K562 (cell line): ENCODE measurements at regions of chr7 and their contacts with region 1.

Region 1: GRCh38 chr7:141451232-141451631 is 100.0 kb upstream of the AGK start:
- DNase-seq: no peak
- ATAC-seq: no peak
- H3K4me3 ChIP-seq: no peak overlapping the region
- H3K27ac ChIP-seq: no peak overlapping the region
- H3K4me1 ChIP-seq: no peaks in the 10 kb centered on the region
- H3K27me3 ChIP-seq: peaks cover 2 to 14% of the 10 kb centered on the region in 2 experiments; a peak in 4 of 5 replicates
- CTCF ChIP-seq: no peak
- EP300 ChIP-seq: no peak
- POLR2A ChIP-seq: no peak
- RAD21 ChIP-seq: no peak

Region 2: DNA sequence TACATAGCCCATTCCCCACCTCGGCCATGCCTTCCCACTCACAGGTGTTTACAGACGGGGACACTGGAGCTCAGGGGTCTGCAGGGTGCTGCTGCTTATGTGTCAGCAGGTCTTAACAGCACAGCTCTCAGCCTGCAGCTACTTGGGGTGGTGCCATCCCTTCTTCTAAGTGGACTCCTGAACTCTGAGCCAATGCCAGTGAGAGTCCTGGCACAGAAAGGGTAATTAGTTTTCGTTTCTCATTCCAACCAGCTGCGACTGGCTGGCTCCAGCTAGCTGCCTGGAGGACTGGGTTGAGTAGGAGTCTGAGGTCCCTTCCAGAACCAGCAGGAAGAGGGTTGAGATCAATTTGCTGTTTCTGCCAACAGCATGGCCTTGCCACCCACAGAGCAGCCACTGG is 11.7 kb after region 1 on chr7:
- CTCF ChIA-PET with region 1: no interaction called
- POLR2A ChIA-PET with region 1: interaction called, 11 read pairs
- in situ Hi-C with region 1: no loop called
- intact Hi-C with region 1: no loop called
- DNase-seq: no peak
- ATAC-seq: no peak
- H3K4me3 ChIP-seq: no peak overlapping the region
- H3K27ac ChIP-seq: no peak overlapping the region
- H3K4me1 ChIP-seq: no peaks in the 10 kb centered on the region
- H3K27me3 ChIP-seq: peaks cover 10 to 54% of the 10 kb centered on the region in 2 experiments; a peak in 4 of 5 replicates
- CTCF ChIP-seq: no peak
- EP300 ChIP-seq: no peak
- POLR2A ChIP-seq: no peak
- RAD21 ChIP-seq: no peak

Region 3: GRCh38 chr7:141475679-141476078 is 24.4 kb after region 1 on chr7:
- CTCF ChIA-PET with region 1: no interaction called
- POLR2A ChIA-PET with region 1: no interaction called
- in situ Hi-C with region 1: no loop called
- intact Hi-C with region 1: no loop called
- DNase-seq: no peak
- ATAC-seq: no peak
- H3K4me3 ChIP-seq: no peak overlapping the region
- H3K27ac ChIP-seq: no peak overlapping the region
- H3K4me1 ChIP-seq: no peaks in the 10 kb centered on the region
- H3K27me3 ChIP-seq: peaks cover 10 to 26% of the 10 kb centered on the region in 2 experiments; a peak in 4 of 5 replicates
- CTCF ChIP-seq: no peak
- EP300 ChIP-seq: no peak
- POLR2A ChIP-seq: no peak
- RAD21 ChIP-seq: no peak